SK-N-SH (cell line): ENCODE measurements at regions of chr9 and their contacts with region 1.

Region 1: DNA sequence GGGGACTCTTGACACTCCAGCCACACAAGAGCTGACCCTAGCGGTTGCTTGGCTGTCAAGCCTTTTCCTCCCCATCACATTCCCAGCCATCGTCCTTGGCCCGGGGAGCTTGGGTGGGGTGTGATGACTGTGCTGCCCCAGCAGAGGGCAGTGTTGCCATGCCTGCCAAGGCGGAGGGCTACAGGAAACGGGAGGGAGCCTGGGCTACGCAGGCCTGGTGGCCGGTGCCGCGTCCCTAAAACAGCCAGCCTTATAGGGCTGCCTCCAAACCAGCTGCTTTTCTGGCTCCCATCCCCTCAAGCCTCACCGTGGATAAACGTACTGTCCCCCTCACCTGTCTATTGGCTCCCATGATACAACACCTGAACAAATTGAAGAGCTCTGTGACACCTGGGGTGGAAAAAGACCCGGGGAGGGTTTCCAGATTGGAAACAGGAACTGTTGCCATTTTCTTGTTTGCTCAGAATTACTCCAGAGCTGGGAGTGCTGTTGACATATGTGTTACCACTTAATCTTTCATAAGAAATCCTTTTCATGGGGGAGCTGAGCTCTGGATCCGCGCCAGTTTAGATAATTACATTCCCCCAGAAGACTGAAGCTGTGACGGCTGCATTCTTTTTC is 72.8 kb upstream of the ASTN2 start:
- DNase-seq: peak; percentile 85
- H3K4me3 ChIP-seq: peak overlapping the region in 1 of 2 experiments; percentile 34; a peak in 1 of 4 replicates
- H3K27ac ChIP-seq: peak overlapping the region in 1 of 2 experiments; percentile 43; a peak in 1 of 4 replicates
- H3K4me1 ChIP-seq: peaks cover 0 to 8% of the 10 kb centered on the region in 2 experiments; a peak in 1 of 4 replicates
- H3K27me3 ChIP-seq: no peaks in the 10 kb centered on the region
- CTCF ChIP-seq: peak; percentile 87
- EP300 ChIP-seq: peak in 1 of 2 experiments; percentile 7; a peak in 1 of 4 replicates
- RAD21 ChIP-seq: peak; percentile 96

Region 2: GRCh38 chr9:117451311-117451710 is 36.4 kb before region 1 on chr9:
- CTCF ChIA-PET with region 1: interaction called, 15 read pairs
- POLR2A ChIA-PET with region 1: no interaction called
- DNase-seq: no peak
- H3K4me3 ChIP-seq: no peak overlapping the region
- H3K27ac ChIP-seq: no peak overlapping the region
- H3K4me1 ChIP-seq: no peaks in the 10 kb centered on the region
- H3K27me3 ChIP-seq: no peaks in the 10 kb centered on the region
- CTCF ChIP-seq: no peak
- EP300 ChIP-seq: no peak
- RAD21 ChIP-seq: no peak

Region 3: GRCh38 chr9:118170032-118170955 is 682.6 kb after region 1 on chr9:
- CTCF ChIA-PET with region 1: interaction called, 11 read pairs
- POLR2A ChIA-PET with region 1: no interaction called
- DNase-seq: peak; percentile 57
- H3K4me3 ChIP-seq: no peak overlapping the region
- H3K27ac ChIP-seq: no peak overlapping the region
- H3K4me1 ChIP-seq: no peaks in the 10 kb centered on the region; a peak in 1 of 4 replicates
- H3K27me3 ChIP-seq: no peaks in the 10 kb centered on the region
- CTCF ChIP-seq: peak; percentile 60
- EP300 ChIP-seq: no peak
- RAD21 ChIP-seq: peak; percentile 93